ENCODE measurements at regions of chr1 and their contacts with region 1.

Region 1: DNA sequence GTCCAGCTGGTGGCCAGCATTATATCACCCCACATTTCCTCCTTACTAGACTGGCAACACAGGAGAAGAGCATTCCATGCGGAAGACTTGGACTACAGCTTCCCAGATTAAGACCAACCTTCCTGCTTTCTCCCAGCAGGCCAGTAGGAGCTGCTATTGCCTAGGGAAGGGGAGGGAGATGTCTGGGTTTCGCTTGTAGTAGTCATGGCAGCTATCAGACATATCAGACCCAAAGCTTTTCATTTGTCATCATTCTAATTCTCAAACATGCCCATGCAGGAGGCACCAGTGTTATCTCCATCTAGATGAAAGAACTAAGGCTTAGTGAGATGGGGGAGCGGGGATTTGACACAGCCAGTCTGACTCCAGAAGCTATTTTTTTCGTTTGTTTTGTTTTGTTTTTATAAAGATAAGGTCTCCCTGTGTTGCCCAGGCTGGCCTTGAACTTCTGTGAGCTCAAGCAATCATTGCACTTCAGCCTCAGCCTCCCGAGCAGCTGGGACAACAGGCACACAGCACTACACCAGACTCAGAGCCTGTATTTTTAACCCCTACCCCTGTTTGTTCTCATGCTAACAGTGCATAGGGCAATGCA is 4.5 kb downstream of the PLA2G2A start:
- DNase-seq: peak in 4 of 5 donors; percentile 55 to 58 (median 56)
- ATAC-seq: peak; percentile 79 to 85 (median 84)
- H3K4me3 ChIP-seq: peak overlapping the region in 1 of 12 donors; percentile 26
- H3K27ac ChIP-seq: peak overlapping the region in 3 of 12 donors; percentile 1 to 24 (median 16)
- H3K4me1 ChIP-seq: peaks cover 0 to 18% (median 10%) of the 10 kb centered on the region in 12 donors
- H3K27me3 ChIP-seq: no peaks in the 10 kb centered on the region
- CTCF ChIP-seq: peak; percentile 58 to 87 (median 82)
- POLR2A ChIP-seq: no peak

Region 2: GRCh38 chr1:19514391-19514831 is 460.5 kb before region 1 on chr1:
- intact Hi-C with region 1: no loop called
- DNase-seq: peak; percentile 54 to 73 (median 68)
- ATAC-seq: peak; percentile 84 to 88 (median 86)
- H3K4me3 ChIP-seq: no peak overlapping the region
- H3K27ac ChIP-seq: peak overlapping the region in 11 of 12 donors; percentile 36 to 85 (median 54)
- H3K4me1 ChIP-seq: peaks cover 0 to 37% (median 2%) of the 10 kb centered on the region in 12 donors
- H3K27me3 ChIP-seq: no peaks in the 10 kb centered on the region
- CTCF ChIP-seq: no peak
- POLR2A ChIP-seq: no peak

Region 3: GRCh38 chr1:20080441-20081352 is 105.8 kb after region 1 on chr1:
- intact Hi-C with region 1: loop called in 2 of 10 experiments (anchors 5 to 10 kb)
- DNase-seq: no peak
- ATAC-seq: peak in 2 of 4 donors; percentile 6 to 14
- H3K4me3 ChIP-seq: no peak overlapping the region
- H3K27ac ChIP-seq: peak overlapping the region in 7 of 12 donors; percentile 21 to 59 (median 35)
- H3K4me1 ChIP-seq: peaks cover 0 to 52% (median 22%) of the 10 kb centered on the region in 12 donors
- H3K27me3 ChIP-seq: no peaks in the 10 kb centered on the region
- CTCF ChIP-seq: no peak
- POLR2A ChIP-seq: no peak

Region 4: DNA sequence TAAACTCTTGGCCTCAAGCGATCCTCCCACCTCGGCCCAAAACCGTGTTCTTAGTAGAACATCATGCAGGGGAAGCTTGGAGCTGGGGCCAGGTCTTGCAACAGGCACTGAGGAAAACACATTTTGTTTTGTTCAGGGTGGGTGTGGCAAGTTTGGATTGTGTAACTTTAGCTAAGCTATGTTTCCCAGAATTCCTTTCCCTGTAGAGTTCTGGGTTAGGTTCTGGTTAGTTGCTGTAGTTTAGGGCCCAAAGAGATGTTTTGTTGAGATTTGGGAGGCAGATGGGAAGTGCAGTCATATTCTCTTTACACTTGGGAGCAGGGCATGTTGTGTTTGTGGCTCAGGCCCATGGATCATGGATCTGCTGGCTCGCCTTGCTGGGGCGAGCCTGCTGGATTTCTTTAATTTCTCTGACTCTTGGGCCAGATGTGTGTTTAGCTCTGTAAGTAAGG is 119.0 kb after region 1 on chr1:
- intact Hi-C with region 1: loop called in 3 of 10 experiments (anchors 5 to 10 kb)
- DNase-seq: peak in 4 of 5 donors; percentile 39 to 85 (median 70)
- ATAC-seq: peak; percentile 74 to 91 (median 80)
- H3K4me3 ChIP-seq: no peak overlapping the region
- H3K27ac ChIP-seq: peak overlapping the region; percentile 18 to 85 (median 63)
- H3K4me1 ChIP-seq: peaks cover 0 to 16% (median 0%) of the 10 kb centered on the region in 12 donors
- H3K27me3 ChIP-seq: no peaks in the 10 kb centered on the region
- CTCF ChIP-seq: no peak
- POLR2A ChIP-seq: no peak

Region 5: GRCh38 chr1:20100632-20101355 is 125.9 kb after region 1 on chr1:
- intact Hi-C with region 1: loop called in 2 of 10 experiments (anchors 5 to 10 kb)
- DNase-seq: peak in 4 of 5 donors; percentile 30 to 43 (median 38)
- ATAC-seq: peak in 3 of 4 donors; percentile 82 to 87 (median 83)
- H3K4me3 ChIP-seq: no peak overlapping the region
- H3K27ac ChIP-seq: no peak overlapping the region
- H3K4me1 ChIP-seq: peaks cover 0 to 10% (median 0%) of the 10 kb centered on the region in 12 donors
- H3K27me3 ChIP-seq: peaks cover 0 to 5% (median 0%) of the 10 kb centered on the region in 9 donors
- CTCF ChIP-seq: peak; percentile 59 to 77 (median 70)
- POLR2A ChIP-seq: no peak

Measured in heart left ventricle (tissue), 16 donors.